ENCODE measurements at regions of chr11 and their contacts with region 1.

Region 1: DNA sequence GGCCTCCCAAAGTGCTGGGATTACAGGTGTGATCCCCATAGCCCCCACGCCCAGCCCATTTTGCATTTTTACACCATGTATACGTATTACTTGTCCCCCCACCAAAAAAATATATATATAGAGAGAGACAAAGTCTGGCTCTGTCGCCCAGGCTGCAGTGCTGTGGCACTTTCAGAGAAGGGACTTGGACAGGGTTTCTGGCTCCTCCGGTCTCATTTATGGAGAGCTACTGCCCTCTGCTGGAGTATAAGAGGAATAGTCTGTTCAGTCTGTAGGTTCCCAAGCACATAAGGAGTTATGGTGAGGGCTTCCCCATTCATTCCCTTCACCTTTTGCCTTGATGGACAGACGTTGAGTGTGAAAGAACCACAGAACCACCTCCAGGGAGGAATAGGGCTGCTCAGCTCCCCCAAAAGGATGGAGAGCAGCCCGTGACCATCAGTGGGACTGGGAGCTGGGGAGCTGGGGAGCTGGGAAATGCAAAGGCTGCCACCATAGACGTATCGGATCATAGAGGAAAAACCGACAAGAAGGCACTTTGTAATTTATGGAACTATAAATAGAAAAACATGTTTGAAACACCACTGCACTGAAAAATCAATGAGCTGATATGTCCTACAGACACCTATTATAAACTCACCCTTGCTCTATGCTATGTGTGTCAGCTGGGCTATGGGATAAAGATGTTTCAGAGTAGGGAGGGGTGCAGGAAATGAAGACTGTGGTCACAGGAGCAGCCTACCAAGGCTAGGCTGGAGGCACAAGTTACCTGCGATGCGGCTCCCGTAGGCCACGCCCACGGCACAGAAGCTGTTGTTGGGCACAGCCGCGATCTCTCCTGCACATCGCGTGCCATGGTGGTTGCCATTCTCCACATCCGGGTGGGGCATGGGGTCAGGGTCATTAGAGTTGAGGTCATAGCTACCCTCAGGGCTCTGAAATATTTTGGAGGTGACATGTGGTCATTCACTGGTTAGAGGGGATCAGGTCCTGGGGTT is 5.2 kb downstream of the PCSK7 start:
- DNase-seq: peak; percentile 51
- H3K4me3 Mint-ChIP-seq: no peak overlapping the region
- H3K27ac Mint-ChIP-seq: peak overlapping the region; percentile 49
- H3K4me1 Mint-ChIP-seq: peaks cover 36% of the 10 kb centered on the region
- H3K27me3 Mint-ChIP-seq: no peaks in the 10 kb centered on the region

Region 2: DNA sequence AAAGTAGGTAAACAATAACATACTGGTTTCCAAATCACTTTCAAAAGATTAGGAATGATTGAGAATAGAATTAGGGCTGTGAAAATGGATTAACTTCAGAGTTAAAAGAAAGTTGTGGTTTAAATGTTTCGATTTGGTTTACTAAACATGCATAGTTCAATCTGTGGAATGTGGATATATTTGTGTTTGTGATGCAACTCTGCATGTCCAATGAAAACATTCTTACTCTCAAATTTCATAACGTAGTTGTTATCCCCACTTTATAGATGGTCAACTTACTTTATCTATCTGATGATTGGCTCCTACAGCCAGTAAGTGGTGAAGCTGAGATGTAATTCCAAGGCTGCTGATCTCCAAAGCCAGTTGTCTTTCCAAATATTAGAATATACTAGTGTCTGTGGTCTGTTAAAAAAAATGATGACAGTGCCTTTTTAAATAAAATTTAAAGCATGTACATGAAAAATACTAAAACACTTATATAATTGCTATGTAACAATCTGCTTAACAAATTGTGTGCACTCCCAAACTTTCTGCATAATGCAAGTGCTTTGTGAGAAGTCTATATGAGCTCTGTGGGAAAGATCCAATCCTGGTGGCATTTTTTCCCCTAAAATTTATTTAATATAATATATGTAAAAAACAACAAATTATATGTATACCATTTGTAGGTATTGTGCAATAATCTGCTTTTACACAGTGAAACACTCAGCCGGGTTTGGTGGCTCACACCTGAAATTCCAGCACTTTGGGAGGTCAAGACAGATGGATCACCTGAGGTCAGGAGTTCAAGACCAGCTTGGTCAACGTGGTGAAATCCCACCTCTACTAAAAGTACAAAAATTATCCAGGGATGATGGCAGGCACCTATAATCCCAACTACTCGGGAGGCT is 118.7 kb before region 1 on chr11:
- CTCF ChIA-PET with region 1: interaction called, 11 read pairs
- POLR2A ChIA-PET with region 1: no interaction called
- DNase-seq: no peak
- H3K4me3 Mint-ChIP-seq: no peak overlapping the region
- H3K27ac Mint-ChIP-seq: no peak overlapping the region
- H3K4me1 Mint-ChIP-seq: peaks cover 5% of the 10 kb centered on the region
- H3K27me3 Mint-ChIP-seq: no peaks in the 10 kb centered on the region

Region 3: DNA sequence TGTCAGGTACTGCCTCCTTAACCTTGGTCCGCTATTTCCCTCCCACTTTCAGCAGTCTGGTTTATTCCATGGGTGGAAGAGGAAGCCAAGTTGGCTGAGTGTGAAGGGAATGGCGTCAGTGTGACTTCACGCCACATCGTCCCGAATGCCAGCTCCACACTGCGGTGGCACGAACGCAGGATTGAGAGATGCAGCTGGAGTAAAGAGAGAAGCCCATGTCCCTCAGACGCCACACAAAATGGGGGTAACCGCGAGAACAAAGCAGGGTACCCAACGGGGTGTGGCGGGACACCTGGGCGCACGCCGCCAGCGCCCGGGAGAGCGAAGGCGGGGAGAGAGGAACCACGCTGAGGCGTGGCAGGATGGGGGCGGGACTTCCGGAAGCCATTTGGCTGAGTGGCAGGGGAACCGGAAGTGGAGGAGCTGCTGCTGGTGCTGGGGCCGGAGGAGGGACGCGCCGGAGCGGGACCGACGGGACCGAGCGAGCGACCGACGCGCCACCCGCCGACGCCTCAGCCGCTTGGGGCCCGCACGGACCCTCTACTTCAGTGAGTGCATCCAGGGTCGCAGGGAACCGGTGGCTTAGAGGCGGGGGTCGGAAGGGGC is 82.7 kb before region 1 on chr11 and contains the start of gene PAFAH1B2:
- CTCF ChIA-PET with region 1: interaction called, 12 read pairs
- POLR2A ChIA-PET with region 1: interaction called, 32 read pairs
- DNase-seq: peak; percentile 95
- H3K4me3 Mint-ChIP-seq: peak within 1 kb of the TSS; percentile 96
- H3K27ac Mint-ChIP-seq: peak within 1 kb of the TSS; percentile 86
- H3K4me1 Mint-ChIP-seq: peaks cover 45% of the 10 kb centered on the region
- H3K27me3 Mint-ChIP-seq: peaks cover 17% of the 10 kb centered on the region
- total RNA-seq, gene PAFAH1B2: 60.1 to 62.8 TPM

Region 4: GRCh38 chr11:117178210-117179034 is 48.3 kb before region 1 on chr11 and contains the start of gene SIDT2:
- CTCF ChIA-PET with region 1: interaction called, 95 read pairs
- POLR2A ChIA-PET with region 1: interaction called, 42 read pairs
- DNase-seq: peak; percentile 93
- H3K4me3 Mint-ChIP-seq: peak within 1 kb of the TSS; percentile 92
- H3K27ac Mint-ChIP-seq: peak within 1 kb of the TSS; percentile 85
- H3K4me1 Mint-ChIP-seq: peaks cover 32% of the 10 kb centered on the region
- H3K27me3 Mint-ChIP-seq: no peaks in the 10 kb centered on the region
- total RNA-seq, gene SIDT2: 38.1 to 42.9 TPM

Region 5: DNA sequence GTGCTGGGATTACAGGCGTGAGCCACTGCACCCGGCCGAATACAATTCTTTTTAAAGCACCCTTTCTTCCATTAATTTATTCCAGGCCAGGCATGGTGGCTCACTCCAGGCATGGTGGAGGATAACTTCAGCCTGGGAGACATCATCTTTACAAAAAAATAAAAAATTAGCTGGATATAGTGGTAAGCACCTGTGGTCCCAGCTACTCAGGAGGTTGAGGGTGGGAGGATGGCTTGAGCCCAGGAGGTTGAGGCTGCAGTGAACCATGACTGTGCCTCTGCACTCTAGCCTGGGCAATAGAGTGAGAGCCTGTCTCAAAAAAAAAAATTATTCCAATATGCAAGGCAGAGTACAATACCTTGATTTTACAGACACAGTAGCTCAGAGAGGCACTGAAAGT is 16.1 kb before region 1 on chr11:
- CTCF ChIA-PET with region 1: interaction called, 17 read pairs
- POLR2A ChIA-PET with region 1: interaction called, 4 read pairs
- DNase-seq: no peak
- H3K4me3 Mint-ChIP-seq: no peak overlapping the region
- H3K27ac Mint-ChIP-seq: no peak overlapping the region
- H3K4me1 Mint-ChIP-seq: peaks cover 1% of the 10 kb centered on the region
- H3K27me3 Mint-ChIP-seq: no peaks in the 10 kb centered on the region

Region 6: DNA sequence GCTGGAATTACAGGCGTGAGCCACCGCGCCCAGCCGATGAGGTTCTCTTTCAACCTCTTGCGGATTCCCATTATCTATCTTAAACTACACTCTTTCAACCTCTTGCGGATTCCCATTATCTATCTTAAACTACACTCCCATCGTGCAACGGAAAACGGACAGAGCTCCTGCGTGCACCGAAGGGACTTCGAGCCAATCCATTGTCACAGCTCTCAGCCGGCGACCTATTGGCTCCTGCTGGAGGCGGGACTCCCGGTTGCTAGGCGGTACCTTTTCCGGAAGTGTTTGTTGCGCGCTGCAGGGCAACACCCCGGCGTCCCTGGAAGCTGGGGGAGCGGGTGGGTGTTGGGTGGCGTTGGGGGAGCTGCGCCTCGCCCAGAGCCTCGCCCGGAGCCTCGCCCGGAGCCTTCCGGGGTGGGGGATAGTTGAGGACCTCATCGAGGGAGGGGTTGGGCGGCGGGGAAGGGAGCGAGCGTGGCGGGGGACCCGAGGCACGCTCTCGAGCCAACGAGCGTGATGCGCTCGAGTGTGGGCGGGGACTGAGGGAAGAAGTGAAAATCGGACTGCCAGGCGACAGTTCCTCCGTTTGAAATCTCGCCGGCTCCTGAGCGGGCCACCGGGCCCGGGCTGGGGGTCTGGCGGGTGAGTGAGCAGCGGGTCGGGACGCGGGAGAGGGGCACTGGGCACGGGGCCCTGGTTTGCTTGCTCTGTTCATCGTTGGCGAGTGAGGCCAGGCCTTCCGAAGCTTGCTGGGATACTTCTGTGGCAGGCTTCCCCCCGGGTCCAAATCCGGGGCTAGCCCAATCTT is 101.1 kb after region 1 on chr11 and contains the start of gene CEP164:
- CTCF ChIA-PET with region 1: interaction called, 22 read pairs
- POLR2A ChIA-PET with region 1: interaction called, 55 read pairs
- DNase-seq: peak; percentile 96
- H3K4me3 Mint-ChIP-seq: peak within 1 kb of the TSS; percentile 58
- H3K27ac Mint-ChIP-seq: no peak within 1 kb of the TSS
- H3K4me1 Mint-ChIP-seq: peaks cover 13% of the 10 kb centered on the region
- H3K27me3 Mint-ChIP-seq: peaks cover 4% of the 10 kb centered on the region
- total RNA-seq, gene CEP164: 41.4 to 45.6 TPM